ENCODE measurements at regions of chr1 and their contacts with region 1.

Region 1: DNA sequence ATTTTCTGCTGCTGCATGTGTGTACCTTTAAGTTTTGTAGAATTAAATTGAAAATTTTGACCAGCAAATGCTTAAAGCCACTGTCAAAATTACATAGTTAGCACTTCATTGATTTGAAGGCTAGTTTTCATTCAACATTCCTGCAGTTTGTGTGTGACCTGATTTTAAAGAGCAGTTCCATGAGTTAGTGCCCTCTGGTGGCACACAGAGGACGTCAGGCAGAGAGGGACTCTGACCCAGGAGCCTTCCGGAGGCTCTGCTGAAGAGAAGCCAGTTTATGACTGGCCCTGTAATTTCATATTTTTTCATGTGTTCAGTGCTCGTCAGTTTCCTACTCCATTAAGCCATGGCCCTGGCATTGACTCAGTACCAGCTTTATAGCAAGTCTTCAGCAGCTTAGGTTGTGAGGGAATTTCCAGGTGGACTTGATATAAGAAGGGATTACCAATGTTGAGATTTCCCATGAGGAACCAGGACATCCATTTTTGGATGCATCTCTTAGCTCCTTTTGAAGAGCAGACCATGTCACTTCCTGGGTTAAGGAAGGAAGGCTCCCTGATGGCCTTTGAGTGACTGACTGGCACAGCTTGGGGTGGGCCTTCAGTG is 104.7 kb downstream of the CAMTA1 start:
- DNase-seq: peak; percentile 53
- ATAC-seq: peak; percentile 49
- H3K4me3 ChIP-seq: no peak overlapping the region
- H3K4me3 Mint-ChIP-seq: no peak overlapping the region
- H3K27ac ChIP-seq: no peak overlapping the region
- H3K27ac Mint-ChIP-seq: no peak overlapping the region
- H3K4me1 ChIP-seq: no peaks in the 10 kb centered on the region
- H3K4me1 Mint-ChIP-seq: peaks cover 2% of the 10 kb centered on the region
- H3K27me3 ChIP-seq: no peaks in the 10 kb centered on the region
- H3K27me3 Mint-ChIP-seq: no peaks in the 10 kb centered on the region
- CTCF ChIP-seq: peak; percentile 75

Region 2: DNA sequence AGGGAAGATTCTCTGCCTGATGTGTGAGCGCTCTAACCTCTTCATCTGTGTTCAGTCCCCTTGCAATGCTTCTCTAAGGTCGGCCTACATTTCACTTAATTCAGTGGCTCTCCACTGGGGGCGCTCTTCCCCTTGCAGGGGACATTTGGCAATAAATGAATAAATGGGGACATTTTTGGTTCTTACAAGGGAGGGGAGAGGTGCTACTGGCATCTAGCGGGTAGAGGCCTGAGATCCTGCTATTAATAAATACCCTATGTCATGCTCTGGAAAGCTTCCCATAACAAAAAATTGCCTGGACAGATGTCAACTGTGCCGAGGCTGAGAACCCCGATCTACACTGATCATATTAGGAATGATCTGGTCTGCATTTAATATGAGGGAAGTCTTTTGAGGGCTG is 162.4 kb before region 1 on chr1:
- CTCF ChIA-PET with region 1: interaction called, 35 read pairs
- POLR2A ChIA-PET with region 1: interaction called, 4 read pairs
- intact Hi-C with region 1: loop called (anchors 1 kb)
- DNase-seq: peak; percentile 63
- ATAC-seq: peak; percentile 49
- H3K4me3 ChIP-seq: no peak overlapping the region
- H3K4me3 Mint-ChIP-seq: no peak overlapping the region
- H3K27ac ChIP-seq: no peak overlapping the region
- H3K27ac Mint-ChIP-seq: no peak overlapping the region
- H3K4me1 ChIP-seq: no peaks in the 10 kb centered on the region
- H3K4me1 Mint-ChIP-seq: no peaks in the 10 kb centered on the region
- H3K27me3 ChIP-seq: peaks cover 0 to 2% (median 0%) of the 10 kb centered on the region in 4 experiments
- H3K27me3 Mint-ChIP-seq: peaks cover 3% of the 10 kb centered on the region
- CTCF ChIP-seq: peak; percentile 96

Region 3: GRCh38 chr1:6794164-6794563 is 95.8 kb before region 1 on chr1:
- CTCF ChIA-PET with region 1: interaction called, 9 read pairs
- POLR2A ChIA-PET with region 1: no interaction called
- intact Hi-C with region 1: loop called (anchors 1 kb)
- DNase-seq: peak; percentile 43
- ATAC-seq: no peak
- H3K4me3 ChIP-seq: no peak overlapping the region
- H3K4me3 Mint-ChIP-seq: no peak overlapping the region
- H3K27ac ChIP-seq: no peak overlapping the region
- H3K27ac Mint-ChIP-seq: no peak overlapping the region
- H3K4me1 ChIP-seq: no peaks in the 10 kb centered on the region
- H3K4me1 Mint-ChIP-seq: peaks cover 10% of the 10 kb centered on the region
- H3K27me3 ChIP-seq: no peaks in the 10 kb centered on the region
- H3K27me3 Mint-ChIP-seq: no peaks in the 10 kb centered on the region
- CTCF ChIP-seq: peak; percentile 57

Region 4: DNA sequence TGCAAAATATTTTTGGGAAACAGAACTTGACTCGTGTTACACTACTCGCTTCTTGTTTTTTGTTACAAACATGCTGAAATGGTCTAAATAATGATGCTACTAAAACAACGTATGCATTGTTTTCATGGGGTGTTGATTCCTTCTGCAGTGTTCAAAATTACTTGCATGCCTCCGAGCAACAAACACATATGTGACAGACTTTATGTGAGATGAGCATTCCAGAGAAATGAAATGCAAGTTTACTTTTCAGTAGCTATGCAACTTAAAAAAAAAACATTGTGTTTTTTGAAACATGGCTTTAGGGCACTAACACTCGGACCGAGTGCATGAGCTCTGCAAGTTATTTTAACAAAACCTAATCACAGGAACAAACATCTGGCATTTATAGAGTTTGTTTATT is 19.9 kb before region 1 on chr1:
- CTCF ChIA-PET with region 1: interaction called, 29 read pairs
- POLR2A ChIA-PET with region 1: no interaction called
- intact Hi-C with region 1: no loop called
- DNase-seq: no peak
- ATAC-seq: no peak
- H3K4me3 ChIP-seq: no peak overlapping the region
- H3K4me3 Mint-ChIP-seq: no peak overlapping the region
- H3K27ac ChIP-seq: no peak overlapping the region
- H3K27ac Mint-ChIP-seq: no peak overlapping the region
- H3K4me1 ChIP-seq: no peaks in the 10 kb centered on the region
- H3K4me1 Mint-ChIP-seq: peaks cover 19% of the 10 kb centered on the region
- H3K27me3 ChIP-seq: no peaks in the 10 kb centered on the region
- H3K27me3 Mint-ChIP-seq: no peaks in the 10 kb centered on the region
- CTCF ChIP-seq: no peak

Region 5: DNA sequence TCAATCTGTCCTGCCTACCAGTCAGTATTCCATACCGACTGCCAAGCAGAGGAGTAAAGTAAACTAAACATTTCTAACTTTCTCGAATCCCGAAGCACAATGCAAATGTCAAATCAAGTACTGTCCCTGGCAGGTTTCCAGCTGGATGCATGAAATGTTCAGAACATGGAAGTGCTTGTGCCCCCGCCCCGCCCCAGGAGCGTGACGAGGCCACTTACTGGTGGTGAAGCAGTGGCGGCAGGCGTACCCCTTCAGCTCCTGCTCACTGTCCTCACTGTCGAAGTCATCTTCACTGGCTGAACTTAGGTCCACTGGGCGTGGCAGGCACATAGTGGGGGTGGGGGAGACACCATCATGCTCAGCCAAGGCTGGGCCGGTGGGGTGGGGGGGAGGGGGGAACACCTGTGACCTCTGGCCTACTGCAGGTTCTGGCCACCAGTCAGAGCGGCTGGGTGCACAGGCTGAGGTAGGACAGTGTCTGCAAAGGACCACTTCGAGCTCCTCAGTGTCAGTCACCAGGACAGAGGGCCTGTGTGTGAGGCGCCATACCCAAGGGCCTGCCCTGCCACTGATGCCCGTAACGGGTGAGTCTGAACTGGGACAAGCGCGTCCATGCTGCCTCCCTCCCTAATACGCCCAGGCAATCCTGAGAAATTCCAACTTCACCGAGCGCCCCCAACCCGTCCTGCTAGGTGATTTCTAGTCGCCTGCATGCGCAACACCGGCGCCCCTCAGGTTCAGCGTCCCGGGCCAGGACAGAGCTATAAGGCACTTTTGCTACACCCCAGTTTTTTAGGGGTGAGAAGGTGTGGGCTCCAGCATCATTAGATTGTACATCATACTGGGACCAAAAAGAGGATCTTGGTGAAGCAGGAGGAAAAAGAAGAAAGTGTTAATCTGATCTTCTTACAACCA is 1474.8 kb after region 1 on chr1:
- CTCF ChIA-PET with region 1: no interaction called
- POLR2A ChIA-PET with region 1: no interaction called
- intact Hi-C with region 1: no loop called
- DNase-seq: no peak
- ATAC-seq: no peak
- H3K4me3 ChIP-seq: no peak overlapping the region
- H3K4me3 Mint-ChIP-seq: no peak overlapping the region
- H3K27ac ChIP-seq: no peak overlapping the region
- H3K27ac Mint-ChIP-seq: no peak overlapping the region
- H3K4me1 ChIP-seq: peaks cover 0 to 7% of the 10 kb centered on the region in 2 donors
- H3K4me1 Mint-ChIP-seq: peaks cover 23% of the 10 kb centered on the region
- H3K27me3 ChIP-seq: no peaks in the 10 kb centered on the region
- H3K27me3 Mint-ChIP-seq: no peaks in the 10 kb centered on the region
- CTCF ChIP-seq: no peak